ENCODE measurements at regions of chr20 and their contacts with region 1.

Region 1: DNA sequence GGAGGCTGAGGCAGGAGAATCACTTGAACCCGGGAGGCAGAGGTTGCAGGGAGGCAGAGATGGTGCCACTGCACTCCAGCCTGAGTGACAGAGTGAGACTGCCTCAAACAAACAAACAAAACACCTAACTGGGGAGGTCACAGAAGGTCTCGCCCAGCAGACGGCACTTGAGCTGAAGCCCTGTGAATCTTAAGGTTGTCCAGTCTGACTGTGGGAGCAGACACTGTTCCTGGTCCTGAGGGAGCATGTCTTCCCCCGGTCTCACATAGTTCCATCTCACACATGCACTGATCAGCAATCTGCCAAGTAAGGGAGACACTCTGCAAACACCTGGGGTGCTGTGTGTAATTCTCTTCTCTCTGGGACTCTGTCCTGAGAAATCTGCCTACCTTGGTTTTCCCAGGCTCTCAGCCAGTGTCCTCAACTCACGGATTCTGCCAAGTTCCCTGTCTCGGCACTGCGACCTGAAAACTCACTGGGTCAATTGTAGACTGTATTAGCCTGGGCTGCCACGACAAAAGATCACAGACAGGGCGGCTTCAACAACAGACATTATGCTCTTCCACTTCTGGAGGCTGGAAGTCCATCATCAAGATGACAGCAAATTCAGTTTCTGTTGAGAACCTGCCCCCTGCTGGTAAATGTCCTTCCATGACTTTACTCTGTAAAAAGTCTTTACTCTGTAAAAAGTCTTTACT is 94.3 kb downstream of the JPH2 start:
- DNase-seq: peak; percentile 82
- ATAC-seq: peak; percentile 75
- H3K4me3 ChIP-seq: no peak overlapping the region
- H3K27ac ChIP-seq: no peak overlapping the region
- H3K4me1 ChIP-seq: peaks cover 5% of the 10 kb centered on the region
- H3K27me3 ChIP-seq: no peaks in the 10 kb centered on the region
- CTCF ChIP-seq: peak; percentile 89

Region 2: GRCh38 chr20:44056010-44056698 is 36.5 kb before region 1 on chr20:
- CTCF ChIA-PET with region 1: no interaction called
- POLR2A ChIA-PET with region 1: no interaction called
- intact Hi-C with region 1: loop called (anchors 1 kb)
- DNase-seq: peak; percentile 78
- ATAC-seq: peak; percentile 99
- H3K4me3 ChIP-seq: no peak overlapping the region
- H3K27ac ChIP-seq: no peak overlapping the region
- H3K4me1 ChIP-seq: no peaks in the 10 kb centered on the region
- H3K27me3 ChIP-seq: no peaks in the 10 kb centered on the region
- CTCF ChIP-seq: peak; percentile 87